ENCODE measurements at regions of chr9 and their contacts with region 1.

Region 1: GRCh38 chr9:15873569-15874177 is 320.8 kb downstream of the CCDC171 start:
- DNase-seq: no peak
- H3K4me3 ChIP-seq: no peak overlapping the region
- H3K27ac ChIP-seq: no peak overlapping the region
- H3K4me1 ChIP-seq: no peaks in the 10 kb centered on the region
- H3K27me3 ChIP-seq: no peaks in the 10 kb centered on the region
- CTCF ChIP-seq: peak; percentile 72

Region 2: GRCh38 chr9:15936306-15936921 is 62.7 kb after region 1 on chr9:
- intact Hi-C with region 1: no loop called
- DNase-seq: peak; percentile 18
- H3K4me3 ChIP-seq: no peak overlapping the region
- H3K27ac ChIP-seq: peak overlapping the region; percentile 31
- H3K4me1 ChIP-seq: peaks cover 3% of the 10 kb centered on the region
- H3K27me3 ChIP-seq: no peaks in the 10 kb centered on the region
- CTCF ChIP-seq: no peak

Region 3: GRCh38 chr9:16133556-16134227 is 260.0 kb after region 1 on chr9:
- intact Hi-C with region 1: loop called (anchors 10 kb)
- DNase-seq: peak; percentile 29
- H3K4me3 ChIP-seq: no peak overlapping the region
- H3K27ac ChIP-seq: no peak overlapping the region
- H3K4me1 ChIP-seq: peaks cover 8% of the 10 kb centered on the region
- H3K27me3 ChIP-seq: peaks cover 17% of the 10 kb centered on the region
- CTCF ChIP-seq: peak; percentile 56

Region 4: GRCh38 chr9:16202914-16203728 is 329.4 kb after region 1 on chr9:
- intact Hi-C with region 1: no loop called
- DNase-seq: no peak
- H3K4me3 ChIP-seq: no peak overlapping the region
- H3K27ac ChIP-seq: no peak overlapping the region
- H3K4me1 ChIP-seq: peaks cover 1% of the 10 kb centered on the region
- H3K27me3 ChIP-seq: no peaks in the 10 kb centered on the region
- CTCF ChIP-seq: no peak